ENCODE measurements at regions of chr11 and their contacts with region 1.

Region 1: DNA sequence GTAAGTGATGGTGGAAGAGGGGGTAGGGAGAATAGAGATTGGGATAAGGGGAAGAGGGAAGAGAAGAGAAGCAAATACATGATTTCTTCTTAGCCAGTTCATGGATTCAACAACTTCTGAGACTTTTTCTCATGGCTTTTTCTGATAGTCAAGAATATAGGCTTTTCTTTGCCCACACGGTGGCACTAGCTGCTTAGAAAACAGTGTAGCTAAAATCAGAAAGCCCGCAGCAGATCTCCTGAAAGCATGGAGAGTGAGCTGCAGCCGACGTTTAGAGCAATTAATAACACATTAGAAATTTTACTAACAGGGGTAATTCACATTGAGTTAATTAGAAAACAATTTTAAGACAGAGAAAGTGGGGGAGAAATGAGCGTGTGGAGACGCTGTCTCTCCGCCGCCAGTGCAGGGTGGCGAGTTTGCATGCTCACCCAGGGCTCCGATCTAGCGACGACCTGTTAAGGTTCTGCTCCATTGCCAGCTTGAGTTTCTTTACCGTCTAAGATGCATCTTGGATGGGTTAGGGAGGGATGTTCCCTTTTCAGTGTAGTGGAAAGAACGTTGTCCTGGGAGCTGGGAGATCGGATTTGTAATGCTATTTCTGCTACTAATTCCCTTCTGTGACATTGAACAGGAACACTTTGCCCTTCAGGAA is 3.3 kb upstream of the RAG1 start:
- DNase-seq: peak in 1 of 2 donors; percentile 53
- ATAC-seq: peak; percentile 75

Region 2: DNA sequence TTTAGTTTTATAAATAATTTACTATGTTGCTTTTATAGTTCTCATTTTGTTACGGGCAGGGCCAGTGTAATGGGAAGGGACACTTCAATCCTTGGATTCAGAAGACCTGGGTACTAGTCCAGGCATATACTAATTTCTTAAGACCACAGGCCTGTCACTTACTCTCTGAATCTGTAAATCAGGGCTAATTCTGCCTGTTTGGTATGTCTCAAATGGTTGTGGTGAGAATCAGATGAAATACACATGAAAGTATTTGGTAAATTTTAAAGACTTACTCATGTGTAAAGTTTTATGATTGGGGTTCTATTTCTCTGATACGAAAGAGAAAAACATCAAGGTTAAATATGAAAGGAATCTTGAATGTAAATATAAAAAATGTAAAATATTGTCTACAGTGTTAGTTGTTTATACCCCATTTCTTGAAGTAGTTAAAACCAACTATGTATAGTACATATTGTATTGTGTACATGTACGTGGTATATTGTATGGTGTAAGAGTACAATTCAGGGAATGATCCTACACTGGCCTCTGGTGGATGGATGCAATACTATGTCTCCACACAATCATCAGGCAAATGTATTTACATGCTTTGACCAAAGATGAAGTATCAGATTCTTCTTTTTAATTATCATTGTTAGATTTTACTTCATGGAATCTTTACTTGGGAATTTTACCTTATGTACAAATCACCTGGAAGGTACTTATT is 58.1 kb after region 1 on chr11:
- intact Hi-C with region 1: loop called in 1 of 2 experiments (anchors 10 kb)
- DNase-seq: no peak
- ATAC-seq: peak; percentile 79

Region 3: DNA sequence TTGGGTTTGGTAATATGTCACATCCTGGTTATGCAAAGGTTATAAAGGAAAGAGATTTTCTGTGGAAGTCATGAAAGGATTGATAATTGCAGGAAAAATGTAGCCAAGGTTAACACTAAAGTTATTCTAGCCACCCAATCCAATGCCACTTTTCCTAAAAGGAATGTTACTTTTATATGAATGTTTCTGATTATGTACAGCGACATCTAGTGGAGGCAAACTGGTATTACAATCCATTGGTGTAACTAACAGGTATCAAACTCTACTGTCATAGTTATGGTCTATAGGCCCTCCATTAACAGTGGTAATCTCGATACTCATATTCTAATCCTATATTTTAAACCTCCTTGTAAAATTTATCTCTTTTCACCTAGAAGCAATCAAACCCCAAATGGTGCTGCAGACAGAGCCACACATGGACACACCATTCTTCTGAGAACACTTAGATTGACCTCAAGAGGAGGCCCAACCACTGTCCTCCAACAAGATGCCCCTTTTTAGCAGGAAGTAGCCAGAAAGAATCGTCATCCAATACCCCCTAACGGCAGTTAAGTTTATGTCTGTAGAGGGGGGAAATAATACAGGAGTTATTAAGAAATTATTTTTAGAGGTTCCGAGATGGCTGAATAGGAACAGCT is 108.4 kb after region 1 on chr11:
- intact Hi-C with region 1: loop called in 1 of 2 experiments (anchors 5 kb)
- DNase-seq: no peak
- ATAC-seq: no peak

Region 4: GRCh38 chr11:36746886-36747710 is 182.6 kb after region 1 on chr11:
- intact Hi-C with region 1: loop called in 1 of 2 experiments (anchors 10 kb)
- DNase-seq: peak; percentile 81 to 93
- ATAC-seq: peak; percentile 98

Measured in left colon (tissue), 2 donors.